Mammary epithelial cell (primary cell): ENCODE measurements at regions of chr3 and their contacts with region 1.

Region 1: DNA sequence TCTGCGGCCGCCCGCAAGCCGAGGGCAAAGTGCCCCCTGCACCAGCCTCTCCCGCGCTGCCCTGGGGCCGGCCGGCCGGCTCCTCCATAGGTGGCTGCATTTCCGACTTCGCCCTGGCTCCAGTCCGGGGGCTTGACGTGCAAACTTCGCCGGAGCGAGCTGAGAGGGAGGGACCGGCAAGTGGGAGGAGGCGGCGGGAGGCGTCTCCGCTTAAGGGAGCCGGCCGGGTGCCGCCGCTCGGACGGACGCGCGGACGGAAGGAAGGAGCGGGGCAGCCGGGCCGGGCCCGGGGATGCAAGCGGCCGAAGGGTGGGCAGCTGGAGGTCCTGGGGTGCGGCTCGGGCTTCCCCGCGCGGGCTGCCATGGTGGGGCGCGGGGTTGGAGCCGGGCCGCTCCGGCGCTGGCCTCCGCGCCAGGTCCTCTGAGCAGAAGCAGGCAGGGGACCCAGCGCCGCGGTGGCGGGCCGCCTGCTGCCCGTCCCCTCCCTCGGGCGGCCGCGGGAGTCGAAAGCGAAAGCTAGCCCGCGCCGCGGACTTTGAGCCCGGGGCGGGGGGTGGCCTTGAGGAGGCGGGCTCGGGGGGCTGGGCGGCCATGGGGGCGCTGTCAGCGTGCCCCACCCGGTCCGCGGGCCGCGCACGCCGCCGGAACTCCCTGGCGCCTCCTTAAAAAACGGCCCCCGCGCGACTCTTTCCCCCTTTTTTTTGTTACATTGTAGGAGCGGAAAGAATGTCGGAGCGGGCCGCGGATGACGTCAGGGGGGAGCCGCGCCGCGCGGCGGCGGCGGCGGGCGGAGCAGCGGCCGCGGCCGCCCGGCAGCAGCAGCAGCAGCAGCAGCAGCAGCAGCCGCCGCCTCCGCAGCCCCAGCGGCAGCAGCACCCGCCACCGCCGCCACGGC is at the start of gene SCAANT1:
- DNase-seq: peak; percentile 86
- H3K4me3 ChIP-seq: peak within 1 kb of the TSS; percentile 70 to 94 (median 72)
- H3K27ac ChIP-seq: peak within 1 kb of the TSS; percentile 84
- H3K4me1 ChIP-seq: peaks cover 30% of the 10 kb centered on the region
- H3K27me3 ChIP-seq: no peaks in the 10 kb centered on the region
- CTCF ChIP-seq: no peak
- total RNA-seq, gene SCAANT1: not detected

Region 2: DNA sequence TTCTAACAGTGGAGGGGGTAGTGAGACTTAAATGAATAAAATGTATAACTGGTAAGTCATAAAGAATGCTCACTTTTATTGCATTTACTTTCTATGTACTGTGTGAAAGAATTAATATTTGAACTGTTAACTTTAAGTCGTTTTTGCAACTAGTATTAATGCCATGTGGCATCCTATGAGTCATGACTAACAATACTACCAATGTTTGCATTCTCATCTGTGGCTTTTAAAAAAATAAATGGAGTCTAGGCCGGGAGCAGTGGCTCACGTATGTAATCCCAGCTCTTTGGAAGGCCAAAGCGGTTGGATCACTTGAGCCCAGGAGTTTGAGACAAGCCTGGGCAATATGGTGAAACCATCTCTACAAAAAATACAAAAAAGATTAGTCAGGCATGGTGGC is 87.8 kb before region 1 on chr3:
- CTCF ChIA-PET with region 1: no interaction called
- dilution Hi-C with region 1: loop called (anchors 5 kb)
- in situ Hi-C with region 1: no loop called
- intact Hi-C with region 1: loop called (anchors 2 kb)
- DNase-seq: peak; percentile 96
- H3K4me3 ChIP-seq: no peak overlapping the region
- H3K27ac ChIP-seq: peak overlapping the region; percentile 84
- H3K4me1 ChIP-seq: peaks cover 18% of the 10 kb centered on the region
- H3K27me3 ChIP-seq: no peaks in the 10 kb centered on the region
- CTCF ChIP-seq: no peak

Region 3: DNA sequence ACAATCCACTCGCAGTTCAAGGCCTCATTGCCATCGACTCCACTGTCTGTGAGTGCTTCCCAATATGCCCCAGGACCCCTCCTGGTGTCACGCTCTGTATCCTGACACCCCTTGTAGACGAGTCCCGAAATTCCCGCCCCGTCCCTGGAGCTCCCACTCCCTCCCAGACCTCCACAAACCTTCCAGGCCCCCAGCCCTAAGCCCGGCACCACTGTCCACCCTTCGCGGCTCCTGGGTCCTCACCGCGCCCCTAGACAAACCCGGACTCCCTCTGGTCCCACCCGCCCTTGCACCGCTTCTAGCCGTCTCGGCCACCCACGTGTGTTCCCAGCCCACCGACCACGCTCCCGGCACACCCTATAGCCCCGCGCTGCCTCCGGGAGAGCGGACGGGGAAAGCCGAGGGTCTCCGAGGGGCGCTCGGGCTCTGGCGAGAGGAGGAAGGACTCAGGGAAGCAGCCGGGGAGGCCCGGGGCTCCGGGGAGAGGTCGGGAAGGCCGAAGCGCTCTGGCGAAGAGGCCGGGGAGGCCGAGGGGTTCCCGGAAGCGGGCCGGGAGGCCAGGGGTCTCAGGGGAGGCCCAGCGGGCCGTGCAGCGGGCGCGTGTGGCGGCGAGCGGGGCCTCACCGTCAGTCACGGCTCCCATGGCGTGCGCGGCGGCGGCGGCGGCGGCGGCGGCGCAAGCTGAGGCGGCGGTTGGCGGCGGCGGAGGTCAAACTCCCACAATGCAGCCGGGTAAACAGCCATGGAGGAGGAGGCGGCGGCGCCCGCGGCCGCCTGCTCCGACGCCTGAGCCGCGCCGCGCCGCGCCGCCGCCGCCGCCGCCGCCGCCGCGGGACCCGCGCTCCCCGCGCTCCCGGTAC is 48.7 kb before region 1 on chr3 and contains the starts of genes ATXN7 and THOC7:
- CTCF ChIA-PET with region 1: interaction called, 12 read pairs
- dilution Hi-C with region 1: no loop called
- in situ Hi-C with region 1: loop called in 1 of 2 experiments (anchors 10 kb)
- intact Hi-C with region 1: loop called (anchors 1 kb)
- DNase-seq: peak; percentile 64
- H3K4me3 ChIP-seq: peak within 1 kb of the TSS; percentile 92 to 99 (median 94)
- H3K27ac ChIP-seq: peak within 1 kb of the TSS; percentile 84
- H3K4me1 ChIP-seq: peaks cover 12% of the 10 kb centered on the region
- H3K27me3 ChIP-seq: no peaks in the 10 kb centered on the region
- CTCF ChIP-seq: no peak
- total RNA-seq, gene ATXN7: 21.2 to 30.5 TPM
- total RNA-seq, gene THOC7: 34.5 to 87.5 TPM

Region 4: DNA sequence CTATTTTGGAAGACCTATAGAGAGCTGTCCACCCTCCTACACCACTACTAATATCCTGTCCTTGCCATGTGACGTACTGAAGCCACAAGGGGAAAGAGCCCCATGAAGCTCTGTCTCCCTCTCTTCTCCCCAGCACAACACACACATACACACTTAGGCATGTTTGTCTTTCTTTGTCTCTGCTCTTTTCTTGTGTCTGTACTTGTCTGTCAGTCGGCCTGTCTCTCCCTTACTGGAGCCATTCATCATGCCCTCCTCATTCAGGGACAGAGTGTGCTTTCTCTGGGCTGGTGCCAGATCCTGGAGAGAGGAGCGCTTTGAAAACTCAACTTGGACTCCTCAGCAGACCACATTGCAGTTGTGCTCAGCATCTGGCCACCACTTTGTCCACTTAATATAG is 63.6 kb after region 1 on chr3:
- CTCF ChIA-PET with region 1: no interaction called
- dilution Hi-C with region 1: loop called (anchors 5 kb)
- in situ Hi-C with region 1: no loop called
- intact Hi-C with region 1: no loop called
- DNase-seq: peak; percentile 88
- H3K4me3 ChIP-seq: no peak overlapping the region
- H3K27ac ChIP-seq: peak overlapping the region; percentile 88
- H3K4me1 ChIP-seq: peaks cover 69% of the 10 kb centered on the region
- H3K27me3 ChIP-seq: no peaks in the 10 kb centered on the region
- CTCF ChIP-seq: no peak

Region 5: GRCh38 chr3:64067506-64068346 is 155.6 kb after region 1 on chr3:
- CTCF ChIA-PET with region 1: no interaction called
- dilution Hi-C with region 1: no loop called
- in situ Hi-C with region 1: no loop called
- intact Hi-C with region 1: no loop called
- DNase-seq: no peak
- H3K4me3 ChIP-seq: no peak overlapping the region
- H3K27ac ChIP-seq: no peak overlapping the region
- H3K4me1 ChIP-seq: peaks cover 6% of the 10 kb centered on the region
- H3K27me3 ChIP-seq: no peaks in the 10 kb centered on the region
- CTCF ChIP-seq: no peak